Right ventricle myocardium inferior (tissue), 1 donor: ENCODE measurements at regions of chr15 and their contacts with region 1.

Region 1: GRCh38 chr15:57527382-57528091 is 64.2 kb upstream of the MYZAP start:
- DNase-seq: peak; percentile 71
- ATAC-seq: peak; percentile 75

Region 2: GRCh38 chr15:57158589-57158988 is 368.9 kb before region 1 on chr15:
- intact Hi-C with region 1: loop called (anchors 10 kb)
- DNase-seq: no peak
- ATAC-seq: peak; percentile 83

Region 3: GRCh38 chr15:57340682-57341259 is 186.8 kb before region 1 on chr15:
- intact Hi-C with region 1: loop called (anchors 1 kb)
- DNase-seq: no peak
- ATAC-seq: peak; percentile 49